Posterior vena cava (tissue), 2 donors: ENCODE measurements at regions of chr2 and their contacts with region 1.

Region 1: GRCh38 chr2:60560734-60561644 is 7.5 kb upstream of the BCL11A start:
- DNase-seq: no peak

Region 2: DNA sequence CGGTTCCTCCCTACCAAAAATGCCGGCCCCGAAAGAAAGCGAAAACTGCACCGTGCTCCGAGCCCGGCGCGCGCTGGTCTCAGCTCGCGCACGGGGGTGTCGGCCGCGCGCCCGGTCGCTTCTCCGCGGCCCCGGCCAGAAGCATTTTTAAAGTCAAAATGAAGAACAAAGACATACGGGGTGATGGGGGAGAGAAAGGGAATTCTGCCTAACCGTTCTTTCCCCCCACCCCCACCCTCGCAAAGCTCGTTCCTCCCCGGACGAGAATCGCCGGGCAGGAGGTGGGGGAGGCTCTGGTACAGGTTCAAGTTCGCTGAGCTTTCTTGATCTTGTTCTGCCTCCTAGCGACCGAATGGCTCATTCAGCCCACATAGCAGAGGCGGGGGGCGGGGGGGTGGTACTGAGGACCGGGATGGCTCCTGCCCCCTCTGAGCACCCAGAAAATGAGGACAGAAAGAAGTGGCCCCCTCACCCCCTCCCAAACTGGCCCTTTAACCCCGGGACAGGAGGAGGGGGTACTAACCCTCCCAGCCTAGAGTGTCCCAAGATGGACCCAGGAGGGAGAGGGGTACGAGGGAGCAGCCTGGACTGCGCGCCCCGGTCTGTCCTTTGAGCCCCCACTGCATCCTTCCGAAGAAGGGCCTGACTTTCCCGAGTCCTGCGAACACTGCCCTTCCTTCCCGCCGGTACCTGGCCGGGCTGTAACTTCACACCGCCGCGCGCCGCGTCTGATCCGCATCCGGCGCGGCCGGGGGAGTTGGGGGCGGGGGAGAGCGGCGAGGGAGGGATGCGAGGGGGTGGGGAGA is 10.6 kb before region 1 on chr2:
- intact Hi-C with region 1: no loop called
- DNase-seq: peak; percentile 81

Region 3: DNA sequence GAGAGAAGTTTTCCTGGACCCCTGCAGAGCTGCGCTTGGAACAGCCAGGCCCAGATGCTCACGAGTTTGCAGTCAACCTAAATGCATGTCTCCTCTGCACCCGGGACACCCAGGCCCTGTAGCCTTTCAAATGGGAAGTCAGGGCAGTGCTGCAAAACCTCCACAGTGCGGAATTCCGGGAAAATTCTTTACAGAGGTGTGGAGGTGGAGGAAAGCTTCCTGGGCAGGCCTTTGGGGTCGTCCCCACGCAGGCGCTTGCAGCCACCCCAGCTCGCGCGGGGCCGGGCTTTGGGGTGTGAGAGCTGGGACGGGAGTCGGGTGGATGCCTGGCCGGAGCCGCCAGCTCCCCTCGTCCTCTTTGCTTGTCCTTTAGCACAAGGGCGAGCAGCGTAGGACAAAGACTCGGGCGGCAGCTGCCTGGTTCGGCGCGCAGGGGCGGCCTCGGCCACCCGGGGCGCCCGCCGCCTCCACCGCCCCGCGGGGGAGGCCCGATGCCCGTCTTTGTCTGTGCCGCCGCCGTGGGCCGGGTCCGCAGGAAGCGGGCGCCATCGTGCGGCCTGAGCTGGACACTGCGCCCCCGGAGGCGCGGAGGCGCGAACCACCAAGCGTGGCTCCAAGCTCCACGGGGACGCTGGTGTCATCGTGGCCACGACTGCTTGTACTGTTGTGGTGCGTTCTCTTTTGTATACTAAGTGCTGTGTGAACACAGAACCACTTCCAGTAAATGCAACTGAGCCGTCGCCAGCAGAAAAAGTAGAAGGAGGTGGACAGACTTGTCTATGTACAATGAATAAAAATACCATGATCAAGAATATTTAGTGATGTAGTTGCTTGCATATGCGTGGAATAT is 20.7 kb after region 1 on chr2:
- intact Hi-C with region 1: loop called in 1 of 2 experiments (anchors 1 kb)
- DNase-seq: peak; percentile 92